Naive thymus-derived CD4-positive, alpha-beta T cell (primary cell): ENCODE measurements at regions of chr11 and their contacts with region 1.

Region 1: DNA sequence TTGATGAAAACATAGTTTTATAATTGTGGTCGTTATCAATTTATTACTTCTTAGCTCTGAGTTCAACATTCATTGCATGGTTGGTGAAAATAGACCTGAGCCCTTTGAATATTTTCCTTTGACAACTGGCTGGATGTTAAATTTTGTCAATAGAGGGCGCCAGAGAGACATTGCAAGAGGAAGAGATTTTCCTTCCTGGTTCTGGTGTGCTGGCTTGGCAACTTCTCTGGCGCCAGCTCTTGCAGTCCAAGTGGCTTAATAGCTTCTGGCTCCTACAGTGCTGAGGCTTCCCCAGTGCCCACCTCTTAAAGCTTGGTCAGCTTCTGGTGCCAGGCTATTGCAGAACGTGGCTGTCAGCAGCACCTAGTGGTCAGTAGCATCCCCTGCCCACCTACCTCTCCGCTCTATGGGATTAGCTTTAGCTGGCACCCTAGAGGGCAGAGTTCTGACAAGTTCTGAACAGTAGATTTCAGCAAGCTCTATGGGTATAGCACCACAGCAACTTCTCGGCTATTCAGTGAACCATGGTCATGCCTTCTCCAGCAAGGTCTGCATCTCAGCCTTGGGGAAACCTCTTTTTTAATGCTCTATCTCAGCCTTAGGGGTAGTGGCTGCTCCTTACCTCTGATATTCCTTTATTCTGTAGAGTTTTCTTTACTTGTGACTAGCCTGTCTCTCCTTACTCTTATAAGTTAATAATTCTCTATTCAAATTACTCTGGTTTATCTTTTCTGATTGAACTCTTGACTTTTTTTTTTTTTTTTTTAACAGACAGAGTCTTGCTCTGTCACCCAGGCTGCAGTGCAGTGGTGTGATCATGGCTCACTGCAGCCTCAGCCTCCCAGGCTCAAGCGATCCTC is 59.4 kb downstream of the ACER3 start:
- DNase-seq: peak; percentile 16 to 78 (median 74)
- ATAC-seq: peak; percentile 84
- H3K4me3 ChIP-seq: peak overlapping the region; percentile 51
- H3K4me3 Mint-ChIP-seq: peak overlapping the region; percentile 18 to 86 (median 77)
- H3K27ac ChIP-seq: no peak overlapping the region
- H3K27ac Mint-ChIP-seq: peak overlapping the region in 1 of 9 donors; percentile 52
- H3K4me1 ChIP-seq: peaks cover 0 to 4% of the 10 kb centered on the region in 2 donors
- H3K4me1 Mint-ChIP-seq: peaks cover 0 to 12% (median 11%) of the 10 kb centered on the region in 7 donors
- H3K27me3 ChIP-seq: no peaks in the 10 kb centered on the region
- H3K27me3 Mint-ChIP-seq: peaks cover 0 to 5% (median 0%) of the 10 kb centered on the region in 5 donors

Region 2: DNA sequence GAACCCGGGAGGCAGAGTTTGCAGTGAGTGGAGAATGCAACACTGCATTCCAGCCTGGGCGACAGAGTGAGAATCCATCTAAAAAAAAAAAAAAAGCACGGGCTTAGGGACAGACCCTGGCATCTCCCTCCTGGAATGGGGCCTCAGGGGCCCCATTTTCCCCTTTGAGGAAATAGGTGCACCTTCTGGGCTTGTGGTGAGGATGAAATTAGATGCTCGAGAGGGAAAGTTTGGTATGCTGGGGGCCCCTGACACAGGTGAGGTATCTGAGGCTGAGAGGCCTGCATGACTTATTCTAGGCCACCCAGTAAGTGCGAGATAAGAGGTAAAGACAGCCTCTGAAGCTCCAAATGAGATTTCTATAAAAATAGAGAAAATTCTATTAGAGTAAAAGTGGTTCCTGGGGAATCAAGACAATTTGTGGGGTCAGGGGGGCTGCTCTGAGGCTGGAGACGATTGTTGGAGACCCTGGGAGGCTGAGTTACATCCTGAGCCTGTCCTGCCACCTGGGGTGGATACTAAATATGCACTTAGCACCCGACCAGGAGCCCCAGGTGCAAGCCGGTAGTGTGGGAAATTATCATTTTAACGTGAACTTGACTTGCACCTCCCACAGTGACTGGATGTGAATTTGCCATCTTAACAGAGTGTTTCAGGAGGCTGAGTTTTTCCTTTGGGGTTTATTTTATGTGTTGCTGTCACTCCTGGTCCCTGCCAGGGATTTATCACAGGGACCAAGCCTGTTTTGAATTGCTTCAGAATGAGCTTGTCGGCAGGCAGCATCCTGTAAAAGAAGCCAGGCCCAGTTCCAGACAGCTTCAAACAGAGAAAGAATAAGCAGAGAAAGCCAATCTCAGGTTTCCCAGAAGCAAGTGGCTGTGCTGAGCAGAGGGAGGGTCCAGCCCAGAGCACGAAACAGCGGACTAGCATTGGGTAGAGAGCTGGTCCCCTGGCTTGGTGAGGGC is 185.4 kb before region 1 on chr11:
- CTCF ChIA-PET with region 1: interaction called, 14 read pairs
- POLR2A ChIA-PET with region 1: no interaction called
- intact Hi-C with region 1: loop called (anchors 1 kb)
- DNase-seq: no peak
- ATAC-seq: no peak
- H3K4me3 ChIP-seq: no peak overlapping the region
- H3K4me3 Mint-ChIP-seq: no peak overlapping the region
- H3K27ac ChIP-seq: no peak overlapping the region
- H3K27ac Mint-ChIP-seq: no peak overlapping the region
- H3K4me1 ChIP-seq: no peaks in the 10 kb centered on the region
- H3K4me1 Mint-ChIP-seq: peaks cover 0 to 3% (median 0%) of the 10 kb centered on the region in 7 donors
- H3K27me3 ChIP-seq: no peaks in the 10 kb centered on the region
- H3K27me3 Mint-ChIP-seq: peaks cover 0 to 8% (median 0%) of the 10 kb centered on the region in 5 donors

Region 3: DNA sequence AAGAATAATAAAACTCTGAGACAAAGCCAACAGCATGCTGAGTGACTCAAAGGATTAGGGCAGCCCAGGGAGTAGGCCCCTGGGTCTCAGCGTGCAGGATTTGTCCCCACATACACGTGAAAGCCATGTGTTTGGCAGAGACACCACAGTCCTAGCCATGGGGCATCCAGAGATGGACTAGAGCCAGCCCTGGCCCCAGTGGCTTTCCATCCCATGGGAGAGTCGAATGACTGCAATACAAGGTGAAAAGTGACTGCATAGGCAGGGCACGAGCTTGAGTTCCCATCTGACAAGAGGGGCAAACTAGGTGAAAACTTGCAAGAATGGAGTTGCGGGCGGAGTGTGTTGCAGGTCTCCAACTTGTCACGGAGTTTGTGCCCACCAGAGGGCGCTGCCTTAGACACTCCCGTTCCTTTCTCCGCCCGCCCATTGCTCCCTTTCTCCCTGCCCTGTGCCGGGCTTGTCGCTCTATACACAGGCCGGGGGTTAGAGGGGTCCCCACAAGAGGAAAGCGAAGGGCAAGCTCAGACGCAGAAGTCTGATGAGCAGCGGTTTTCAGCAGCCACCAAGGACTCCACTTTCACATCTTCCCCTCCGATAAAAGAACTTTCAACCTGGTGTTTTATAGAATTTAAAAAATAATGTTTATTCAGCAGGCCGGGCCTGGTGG is 112.8 kb before region 1 on chr11:
- CTCF ChIA-PET with region 1: interaction called, 18 read pairs
- POLR2A ChIA-PET with region 1: no interaction called
- intact Hi-C with region 1: loop called (anchors 1 kb)
- DNase-seq: peak; percentile 25 to 69 (median 49)
- ATAC-seq: peak; percentile 76
- H3K4me3 ChIP-seq: no peak overlapping the region
- H3K4me3 Mint-ChIP-seq: peak overlapping the region in 5 of 10 donors; percentile 9 to 48 (median 25)
- H3K27ac ChIP-seq: no peak overlapping the region
- H3K27ac Mint-ChIP-seq: peak overlapping the region in 1 of 9 donors; percentile 69
- H3K4me1 ChIP-seq: peaks cover 0 to 10% of the 10 kb centered on the region in 2 donors
- H3K4me1 Mint-ChIP-seq: peaks cover 5 to 52% (median 29%) of the 10 kb centered on the region in 7 donors
- H3K27me3 ChIP-seq: no peaks in the 10 kb centered on the region
- H3K27me3 Mint-ChIP-seq: peaks cover 6 to 35% (median 15%) of the 10 kb centered on the region in 5 donors